Activated B cell treated with CpG ODN at 0.5 μM for 24 hours (primary cell): ENCODE measurements at regions of chr10 and their contacts with region 1.

Region 1: DNA sequence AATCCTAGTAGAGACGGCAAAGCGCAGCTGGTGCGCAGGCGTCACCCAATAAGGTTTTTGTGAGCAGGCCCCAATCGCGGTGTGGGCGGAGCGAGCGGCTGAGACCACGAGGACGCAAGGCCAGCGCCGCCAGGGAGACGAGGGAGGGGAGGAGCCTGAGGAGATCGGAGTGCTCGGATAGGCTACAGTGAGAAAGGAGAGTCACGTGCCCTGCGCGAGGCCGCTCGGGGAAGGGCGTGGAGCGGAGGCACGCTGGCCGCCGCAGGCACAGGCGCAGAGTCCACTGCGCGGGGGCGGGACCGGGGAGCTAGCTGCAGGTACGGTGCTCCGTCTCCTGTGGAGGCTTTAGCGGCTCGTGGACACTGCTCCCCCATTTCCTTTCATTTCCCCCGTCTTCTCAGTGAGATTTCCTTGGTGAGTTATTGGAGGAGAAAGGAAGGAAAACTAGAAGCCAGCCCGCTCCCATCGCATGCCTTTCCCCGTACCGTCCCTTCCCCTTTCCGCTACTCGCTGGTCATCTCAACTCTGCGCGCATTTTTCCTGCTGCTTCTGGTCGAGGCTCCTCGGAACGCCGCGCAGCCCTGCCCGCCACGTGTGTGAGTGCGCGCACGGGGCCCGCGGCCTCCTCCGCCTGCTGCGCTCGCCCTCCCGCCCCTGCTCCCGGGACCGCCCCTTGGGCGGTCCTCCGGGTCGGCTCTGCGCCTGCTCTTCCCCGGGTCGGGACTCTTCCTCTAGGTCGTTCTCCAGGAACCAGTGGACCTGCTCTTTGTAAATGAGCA is at the start of gene THNSL1:
- DNase-seq: peak; percentile 85
- ATAC-seq: peak; percentile 95
- H3K4me3 Mint-ChIP-seq: peak within 1 kb of the TSS; percentile 88
- H3K27ac Mint-ChIP-seq: peak within 1 kb of the TSS; percentile 93
- H3K4me1 Mint-ChIP-seq: peaks cover 27% of the 10 kb centered on the region
- H3K27me3 Mint-ChIP-seq: no peaks in the 10 kb centered on the region
- CTCF ChIP-seq: no peak
- total RNA-seq, gene THNSL1: 3.8 TPM in 2 replicates

Region 2: GRCh38 chr10:24706479-24707118 is 310.0 kb before region 1 on chr10:
- CTCF ChIA-PET with region 1: no interaction called
- POLR2A ChIA-PET with region 1: no interaction called
- intact Hi-C with region 1: no loop called
- DNase-seq: no peak
- ATAC-seq: no peak
- H3K4me3 Mint-ChIP-seq: no peak overlapping the region
- H3K27ac Mint-ChIP-seq: no peak overlapping the region
- H3K4me1 Mint-ChIP-seq: peaks cover under 1% of the 10 kb centered on the region
- H3K27me3 Mint-ChIP-seq: peaks cover 3% of the 10 kb centered on the region
- CTCF ChIP-seq: no peak

Region 3: GRCh38 chr10:24887855-24888231 is 128.7 kb before region 1 on chr10:
- CTCF ChIA-PET with region 1: no interaction called
- POLR2A ChIA-PET with region 1: no interaction called
- intact Hi-C with region 1: loop called (anchors 1 kb)
- DNase-seq: no peak
- ATAC-seq: peak; percentile 15
- H3K4me3 Mint-ChIP-seq: peak overlapping the region; percentile 61
- H3K27ac Mint-ChIP-seq: peak overlapping the region; percentile 93
- H3K4me1 Mint-ChIP-seq: peaks cover 34% of the 10 kb centered on the region
- H3K27me3 Mint-ChIP-seq: no peaks in the 10 kb centered on the region
- CTCF ChIP-seq: no peak